ENCODE measurements at regions of chr4 and their contacts with region 1.

Region 1: DNA sequence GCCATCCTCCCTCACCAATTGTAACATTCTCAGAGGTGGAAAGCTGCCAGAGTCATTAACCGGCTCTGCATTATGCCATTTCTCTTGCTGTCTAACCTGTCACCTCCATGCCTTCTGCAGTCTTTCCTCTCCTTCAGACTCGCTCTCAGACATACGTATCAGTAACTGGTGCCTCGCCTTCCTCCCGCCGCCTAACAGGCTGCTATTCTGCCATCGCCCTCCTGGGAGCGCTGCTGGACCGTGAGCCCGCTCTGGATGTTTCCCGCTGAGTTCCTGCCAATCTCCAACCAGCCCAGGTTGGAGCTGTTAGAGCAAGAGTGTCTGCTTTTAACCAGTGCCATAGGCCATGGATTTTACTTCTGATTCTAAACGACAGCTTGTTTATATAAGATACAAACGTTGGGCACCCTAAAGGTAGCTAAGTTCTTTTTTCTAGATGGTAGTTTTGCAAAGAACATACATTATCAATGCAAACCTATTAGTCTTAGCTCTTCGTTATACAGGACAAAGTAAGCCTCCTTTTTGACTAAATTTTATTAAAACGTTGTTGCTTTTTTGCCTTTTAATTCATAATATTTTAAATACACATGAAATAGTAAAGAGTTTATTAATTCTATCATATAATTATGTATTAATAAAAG is 59.5 kb upstream of the NEIL3 start:
- DNase-seq: peak; percentile 81
- ATAC-seq: peak; percentile 63

Region 2: DNA sequence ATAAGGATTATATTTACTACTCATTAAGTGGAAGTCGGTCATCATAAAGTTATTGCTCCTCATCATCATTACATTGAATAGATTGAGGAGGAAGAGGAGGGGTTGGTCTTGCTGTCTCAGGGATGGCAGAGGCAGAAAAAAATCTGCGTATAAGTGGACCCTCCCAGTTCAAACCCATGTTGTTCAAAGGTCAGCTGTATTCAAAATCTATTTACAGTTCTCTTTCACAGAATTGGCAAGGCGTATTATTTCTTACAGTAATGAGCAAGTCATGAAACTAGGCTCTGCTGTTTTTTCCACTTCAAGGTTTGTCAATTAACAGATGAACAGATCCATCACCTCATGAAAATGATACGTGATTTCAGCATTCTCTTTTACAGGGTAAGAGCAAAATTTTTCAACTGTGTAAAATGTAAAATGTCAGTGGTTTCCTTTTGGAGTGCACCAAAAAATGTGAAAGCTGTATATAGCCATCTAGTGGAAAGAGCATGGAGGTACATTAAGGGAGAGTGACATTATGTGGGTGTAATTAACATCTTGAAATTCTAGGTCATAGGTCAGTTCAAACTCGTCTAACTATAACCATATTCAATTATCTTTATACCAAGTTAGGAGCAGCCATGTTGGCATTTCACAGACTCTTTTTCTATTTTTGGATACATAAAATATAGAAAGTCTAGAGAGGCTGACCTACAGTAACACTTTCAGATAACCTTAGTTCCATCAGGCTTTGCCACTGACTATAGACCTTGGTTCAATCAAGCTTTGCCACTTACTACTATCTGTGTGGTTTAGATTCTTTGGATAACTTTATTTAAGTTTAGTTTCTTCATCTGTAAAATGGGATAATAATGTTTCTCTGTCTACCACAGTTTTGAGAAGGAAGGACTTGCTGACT is 89.5 kb after region 1 on chr4:
- intact Hi-C with region 1: loop called (anchors 5 kb)
- DNase-seq: no peak
- ATAC-seq: no peak